HepG2 (cell line): ENCODE measurements at regions of chr19 and their contacts with region 1.

Region 1: DNA sequence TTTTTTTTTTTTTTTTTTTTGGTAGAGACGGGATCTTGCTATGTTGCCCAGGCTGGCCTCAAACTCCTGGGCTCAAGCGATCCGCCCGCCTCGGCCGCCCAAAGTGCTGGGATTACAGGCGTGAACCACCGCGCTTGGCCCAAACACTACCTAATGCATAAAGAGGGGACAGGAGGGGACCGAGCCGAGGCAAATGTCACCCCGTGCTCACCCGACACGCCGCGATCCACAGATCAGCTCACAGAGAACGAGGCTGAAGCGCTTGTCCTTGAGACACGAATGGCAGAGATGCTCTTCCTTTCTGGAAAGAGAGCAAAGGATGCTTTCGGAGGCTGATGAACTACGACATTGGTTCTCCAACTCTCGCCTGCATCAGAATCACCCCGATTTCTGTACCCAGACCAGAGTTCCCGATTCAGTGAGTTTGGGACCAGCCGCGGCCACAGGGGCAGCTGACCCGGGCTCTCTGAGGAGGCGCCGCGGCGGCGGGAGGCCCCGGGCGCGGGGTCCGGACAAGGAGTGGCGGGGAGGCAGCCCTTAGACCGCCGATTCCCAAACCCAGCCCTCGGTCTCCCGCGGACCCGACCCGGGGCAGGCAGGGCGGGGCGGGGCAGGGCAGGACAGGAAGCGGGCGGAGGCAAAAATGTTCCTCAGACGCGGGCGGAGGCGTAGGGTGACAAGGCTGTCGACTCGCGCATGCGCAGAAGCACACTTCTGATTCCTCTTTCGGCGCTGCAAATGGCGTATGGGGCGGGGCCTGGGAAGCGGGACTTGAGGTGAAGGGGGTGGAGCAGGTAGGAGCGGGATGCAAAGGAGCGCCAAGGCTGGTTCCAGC is at the start of gene ZNF699:
- DNase-seq: peak; percentile 87
- ATAC-seq: peak; percentile 87
- H3K4me3 ChIP-seq: peak within 1 kb of the TSS; percentile 71 to 77 (median 74)
- H3K27ac ChIP-seq: peak within 1 kb of the TSS; percentile 68
- H3K4me1 ChIP-seq: peaks cover 6% of the 10 kb centered on the region; the same call in 1 of the 2 replicates
- H3K27me3 ChIP-seq: no peaks in the 10 kb centered on the region
- CTCF ChIP-seq: no peak
- EP300 ChIP-seq: no peak
- POLR2A ChIP-seq: peak in 1 of 2 experiments; percentile 56; a peak in 1 of 4 replicates
- RAD21 ChIP-seq: no peak
- total RNA-seq, gene ZNF699: 2.2 and 2.7 TPM in 2 replicates

Region 2: GRCh38 chr19:9584073-9584833 is 274.9 kb after region 1 on chr19 and contains the start of gene ZNF121:
- CTCF ChIA-PET with region 1: no interaction called
- POLR2A ChIA-PET with region 1: interaction called, 5 read pairs
- in situ Hi-C with region 1: no loop called
- intact Hi-C with region 1: loop called (anchors 5 kb)
- DNase-seq: peak; percentile 77
- ATAC-seq: peak; percentile 91
- H3K4me3 ChIP-seq: peak within 1 kb of the TSS; percentile 78 to 92 (median 79)
- H3K27ac ChIP-seq: peak within 1 kb of the TSS; percentile 85
- H3K4me1 ChIP-seq: peaks cover 39% of the 10 kb centered on the region
- H3K27me3 ChIP-seq: no peaks in the 10 kb centered on the region; a peak in 1 of 5 replicates
- CTCF ChIP-seq: peak; percentile 3; the same call in 1 of the 2 replicates
- EP300 ChIP-seq: no peak
- POLR2A ChIP-seq: peak; percentile 93 to 95
- RAD21 ChIP-seq: no peak
- total RNA-seq, gene ZNF121: 56.3 and 78.4 TPM in 2 replicates